ENCODE measurements at regions of chr18 and their contacts with region 1.

Region 1: GRCh38 chr18:26468931-26469340 is 79.4 kb downstream of the KCTD1 start:
- DNase-seq: peak; percentile 65
- H3K4me3 ChIP-seq: no peak overlapping the region; a peak in 1 of 4 replicates
- H3K27ac ChIP-seq: no peak overlapping the region
- H3K4me1 ChIP-seq: peaks cover 0 to 3% of the 10 kb centered on the region in 2 experiments; a peak in 1 of 4 replicates
- H3K27me3 ChIP-seq: no peaks in the 10 kb centered on the region
- CTCF ChIP-seq: peak; percentile 61
- EP300 ChIP-seq: no peak
- RAD21 ChIP-seq: peak; percentile 46

Region 2: GRCh38 chr18:26458526-26459232 is 10.3 kb before region 1 on chr18:
- CTCF ChIA-PET with region 1: interaction called, 12 read pairs
- POLR2A ChIA-PET with region 1: no interaction called
- DNase-seq: no peak
- H3K4me3 ChIP-seq: no peak overlapping the region
- H3K27ac ChIP-seq: peak overlapping the region in 1 of 2 experiments; percentile 30; a peak in 1 of 4 replicates
- H3K4me1 ChIP-seq: peaks cover 7 to 30% of the 10 kb centered on the region in 2 experiments; a peak in 2 of 4 replicates
- H3K27me3 ChIP-seq: no peaks in the 10 kb centered on the region
- CTCF ChIP-seq: no peak
- EP300 ChIP-seq: no peak
- RAD21 ChIP-seq: no peak

Region 3: DNA sequence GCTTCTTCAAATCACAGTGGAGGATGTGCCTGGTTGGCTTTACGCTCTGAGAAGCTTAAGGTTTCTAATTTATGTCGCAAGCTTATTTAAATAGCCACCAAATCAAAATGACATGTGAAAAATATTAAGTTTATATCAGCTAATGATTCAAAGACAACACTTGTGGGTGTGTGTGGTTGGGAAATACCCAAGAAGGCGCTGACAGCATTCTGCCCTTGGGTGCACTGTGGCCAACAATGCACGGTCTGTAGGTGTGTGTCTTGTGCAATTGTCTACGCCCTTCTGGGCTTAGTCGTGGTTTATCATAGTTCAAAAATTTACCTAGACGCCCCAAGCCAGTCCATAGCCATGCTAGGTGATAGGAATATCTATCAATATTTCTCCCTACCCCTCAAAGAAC is 18.5 kb after region 1 on chr18:
- CTCF ChIA-PET with region 1: interaction called, 12 read pairs
- POLR2A ChIA-PET with region 1: no interaction called
- DNase-seq: no peak
- H3K4me3 ChIP-seq: no peak overlapping the region
- H3K27ac ChIP-seq: no peak overlapping the region
- H3K4me1 ChIP-seq: peaks cover 0 to 3% of the 10 kb centered on the region in 2 experiments; a peak in 2 of 4 replicates
- H3K27me3 ChIP-seq: no peaks in the 10 kb centered on the region
- CTCF ChIP-seq: no peak
- EP300 ChIP-seq: no peak
- RAD21 ChIP-seq: no peak

Measured in SK-N-SH (cell line).